ENCODE measurements at regions of chr16 and their contacts with region 1.

Region 1: DNA sequence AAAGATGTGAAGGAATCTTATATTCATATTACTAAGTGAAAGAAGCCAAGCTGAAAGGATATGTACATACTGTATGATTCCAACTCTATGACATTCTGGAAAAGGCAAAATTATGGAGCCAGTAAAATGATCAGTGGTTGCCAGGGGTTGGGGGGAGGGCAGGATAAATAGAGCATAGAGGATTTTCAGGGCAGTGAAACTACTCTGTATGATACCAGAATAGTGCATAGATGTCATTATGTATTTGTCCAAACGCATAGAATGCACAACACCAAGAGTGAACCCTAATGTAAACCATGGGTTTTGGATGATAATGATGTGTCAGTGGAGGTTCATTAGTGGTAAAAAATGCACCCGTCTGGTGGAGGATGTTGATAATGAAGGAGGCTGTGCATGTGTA is 71.0 kb upstream of the ZNF423 start:
- DNase-seq: no peak
- H3K4me3 ChIP-seq: no peak overlapping the region
- H3K4me3 Mint-ChIP-seq: no peak overlapping the region
- H3K27ac Mint-ChIP-seq: no peak overlapping the region
- H3K4me1 ChIP-seq: no peaks in the 10 kb centered on the region
- H3K4me1 Mint-ChIP-seq: no peaks in the 10 kb centered on the region
- H3K27me3 ChIP-seq: no peaks in the 10 kb centered on the region
- H3K27me3 Mint-ChIP-seq: peaks cover 17% of the 10 kb centered on the region
- CTCF ChIP-seq: no peak

Region 2: GRCh38 chr16:49776085-49776595 is 150.8 kb before region 1 on chr16:
- CTCF ChIA-PET with region 1: no interaction called
- POLR2A ChIA-PET with region 1: no interaction called
- intact Hi-C with region 1: no loop called
- DNase-seq: no peak
- H3K4me3 ChIP-seq: no peak overlapping the region
- H3K4me3 Mint-ChIP-seq: no peak overlapping the region
- H3K27ac Mint-ChIP-seq: no peak overlapping the region
- H3K4me1 ChIP-seq: no peaks in the 10 kb centered on the region
- H3K4me1 Mint-ChIP-seq: no peaks in the 10 kb centered on the region
- H3K27me3 ChIP-seq: peaks cover 1% of the 10 kb centered on the region; the same call in 1 of the 2 replicates
- H3K27me3 Mint-ChIP-seq: peaks cover 12% of the 10 kb centered on the region
- CTCF ChIP-seq: no peak

Region 3: DNA sequence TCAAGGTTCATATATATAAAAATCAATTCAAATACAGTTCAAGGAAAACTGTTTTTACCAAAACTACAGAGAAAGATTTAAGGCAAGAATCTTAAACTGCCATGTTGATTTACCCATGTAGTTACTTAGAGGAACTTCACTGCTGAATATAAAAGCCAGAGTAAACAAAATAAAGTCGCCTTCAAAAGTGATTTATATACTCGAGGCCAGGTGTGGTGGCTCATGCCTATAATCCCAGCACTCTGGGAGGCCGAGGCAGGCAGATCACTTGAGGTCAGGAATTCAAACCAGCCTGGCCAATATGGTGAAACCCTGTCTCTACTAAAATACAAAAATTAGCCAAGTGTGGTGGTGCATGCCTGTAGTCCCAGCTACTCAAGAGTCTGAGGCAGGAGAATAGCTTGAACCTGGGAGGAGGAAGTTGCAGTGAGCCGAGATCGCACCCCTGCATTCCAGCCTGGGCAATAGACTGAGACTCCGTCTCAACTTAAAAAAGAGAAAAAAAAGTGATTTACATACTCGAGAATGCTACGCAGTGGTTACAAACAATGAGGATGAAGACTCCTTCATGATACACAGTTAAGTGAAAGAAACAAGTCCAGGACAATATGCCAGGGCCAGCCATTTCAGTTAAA is 44.0 kb after region 1 on chr16:
- CTCF ChIA-PET with region 1: no interaction called
- POLR2A ChIA-PET with region 1: no interaction called
- intact Hi-C with region 1: loop called (anchors 1 kb)
- DNase-seq: no peak
- H3K4me3 ChIP-seq: no peak overlapping the region
- H3K4me3 Mint-ChIP-seq: no peak overlapping the region
- H3K27ac Mint-ChIP-seq: no peak overlapping the region
- H3K4me1 ChIP-seq: no peaks in the 10 kb centered on the region
- H3K4me1 Mint-ChIP-seq: peaks cover 9% of the 10 kb centered on the region
- H3K27me3 ChIP-seq: 0 out of 2 replicates have a peak, but pooled peaks cover 3% of the 10 kb centered on the region
- H3K27me3 Mint-ChIP-seq: peaks cover 4% of the 10 kb centered on the region
- CTCF ChIP-seq: no peak

Measured in Caco-2 (cell line).